PC-9 (cell line): ENCODE measurements at regions of chr19 and their contacts with region 1.

Region 1: GRCh38 chr19:45632468-45633196 is 6.6 kb downstream of the EML2 start:
- DNase-seq: peak; percentile 90 to 94
- H3K4me3 ChIP-seq: no peak overlapping the region
- H3K27ac ChIP-seq: peak overlapping the region; percentile 54
- H3K4me1 ChIP-seq: peaks cover 34% of the 10 kb centered on the region
- H3K27me3 ChIP-seq: no peaks in the 10 kb centered on the region
- CTCF ChIP-seq: no peak

Region 2: GRCh38 chr19:45455707-45456499 is 176.7 kb before region 1 on chr19:
- CTCF ChIA-PET with region 1: no interaction called
- POLR2A ChIA-PET with region 1: no interaction called
- intact Hi-C with region 1: no loop called
- DNase-seq: peak; percentile 98
- H3K4me3 ChIP-seq: peak overlapping the region; percentile 53; the same call in 1 of the 2 replicates
- H3K27ac ChIP-seq: peak overlapping the region; percentile 93
- H3K4me1 ChIP-seq: peaks cover 38% of the 10 kb centered on the region
- H3K27me3 ChIP-seq: no peaks in the 10 kb centered on the region
- CTCF ChIP-seq: no peak

Region 3: DNA sequence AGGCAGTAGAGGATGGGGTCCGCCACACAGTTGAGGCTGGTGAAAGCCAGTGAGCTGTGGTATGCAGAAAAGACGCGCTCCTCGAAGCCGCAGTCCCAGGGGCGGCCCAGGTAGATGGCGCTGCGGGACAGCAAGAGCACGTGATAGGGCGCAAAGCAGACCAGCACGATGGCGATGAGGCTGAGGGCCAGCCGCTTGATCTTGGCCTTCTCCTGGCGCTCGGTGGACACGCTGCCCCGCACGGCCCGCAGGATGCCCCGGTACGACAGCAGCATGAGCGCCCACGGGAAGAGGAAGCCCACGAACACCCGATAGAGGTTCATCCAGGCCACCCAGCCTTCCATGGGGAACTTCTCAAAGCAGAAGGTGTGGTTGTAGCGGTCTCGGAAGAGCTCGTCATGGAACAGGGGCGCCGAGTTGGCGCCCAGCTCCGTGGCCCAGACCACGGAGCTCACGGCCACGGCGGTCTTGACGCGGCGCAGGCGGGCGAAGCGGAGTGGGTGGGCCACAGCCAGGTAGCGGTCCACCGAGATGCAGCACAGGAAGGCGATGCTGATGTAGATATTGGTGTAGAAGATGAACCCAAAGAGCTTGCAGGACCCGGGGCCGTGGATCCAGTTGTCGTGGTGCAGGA is 41.5 kb before region 1 on chr19:
- CTCF ChIA-PET with region 1: interaction called, 10 read pairs
- POLR2A ChIA-PET with region 1: no interaction called
- intact Hi-C with region 1: no loop called
- DNase-seq: peak; percentile 30 to 62
- H3K4me3 ChIP-seq: no peak overlapping the region
- H3K27ac ChIP-seq: no peak overlapping the region
- H3K4me1 ChIP-seq: no peaks in the 10 kb centered on the region
- H3K27me3 ChIP-seq: no peaks in the 10 kb centered on the region
- CTCF ChIP-seq: peak; percentile 49

Region 4: DNA sequence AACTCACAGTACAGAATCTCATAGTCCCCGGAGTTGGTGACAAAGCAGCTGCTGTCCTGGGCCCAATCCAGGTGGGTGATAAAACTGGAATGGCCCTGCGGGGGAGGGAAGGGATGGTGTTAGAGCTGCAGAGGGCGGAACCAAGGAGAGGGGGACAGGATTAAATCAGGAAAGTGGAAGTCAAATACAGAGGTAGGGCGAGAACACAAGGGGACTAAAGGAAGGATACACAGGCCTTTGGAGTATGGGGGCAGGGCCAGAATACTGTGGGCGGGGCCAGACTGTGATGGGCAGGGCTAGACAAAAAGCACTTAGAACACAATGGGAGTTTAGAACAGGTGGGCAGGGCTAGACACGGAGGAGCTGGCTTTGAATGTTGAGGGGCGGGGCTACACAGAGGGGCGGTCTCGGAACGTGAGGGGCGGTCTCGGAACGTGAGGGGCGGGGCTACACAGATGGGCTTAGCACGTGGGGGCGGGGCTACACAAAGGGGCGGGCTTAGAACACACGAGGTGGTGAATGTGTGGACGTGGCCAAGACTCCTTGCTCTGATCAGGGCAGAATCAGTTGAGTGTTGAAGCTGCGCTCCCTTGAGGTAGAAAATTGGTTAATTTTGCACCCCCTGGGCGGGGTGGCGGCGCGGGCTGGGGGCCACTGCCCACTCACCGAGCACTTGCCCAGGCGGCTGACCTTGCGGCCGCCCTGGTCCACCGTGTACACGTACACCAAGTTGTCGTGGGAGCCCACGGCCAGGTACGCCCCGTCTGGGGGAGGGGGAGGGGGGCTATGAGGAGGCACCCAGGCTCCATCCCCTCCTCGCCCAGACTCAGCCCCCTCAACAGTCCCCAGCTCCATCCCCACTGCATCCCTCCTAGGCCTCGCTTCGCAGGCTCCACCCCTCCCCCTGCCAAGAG is 16.6 kb before region 1 on chr19:
- CTCF ChIA-PET with region 1: no interaction called
- POLR2A ChIA-PET with region 1: interaction called, 3 read pairs
- intact Hi-C with region 1: loop called (anchors 1 kb)
- DNase-seq: peak; percentile 80 to 87
- H3K4me3 ChIP-seq: no peak overlapping the region
- H3K27ac ChIP-seq: peak overlapping the region; percentile 53
- H3K4me1 ChIP-seq: peaks cover 22% of the 10 kb centered on the region
- H3K27me3 ChIP-seq: no peaks in the 10 kb centered on the region
- CTCF ChIP-seq: no peak

Region 5: DNA sequence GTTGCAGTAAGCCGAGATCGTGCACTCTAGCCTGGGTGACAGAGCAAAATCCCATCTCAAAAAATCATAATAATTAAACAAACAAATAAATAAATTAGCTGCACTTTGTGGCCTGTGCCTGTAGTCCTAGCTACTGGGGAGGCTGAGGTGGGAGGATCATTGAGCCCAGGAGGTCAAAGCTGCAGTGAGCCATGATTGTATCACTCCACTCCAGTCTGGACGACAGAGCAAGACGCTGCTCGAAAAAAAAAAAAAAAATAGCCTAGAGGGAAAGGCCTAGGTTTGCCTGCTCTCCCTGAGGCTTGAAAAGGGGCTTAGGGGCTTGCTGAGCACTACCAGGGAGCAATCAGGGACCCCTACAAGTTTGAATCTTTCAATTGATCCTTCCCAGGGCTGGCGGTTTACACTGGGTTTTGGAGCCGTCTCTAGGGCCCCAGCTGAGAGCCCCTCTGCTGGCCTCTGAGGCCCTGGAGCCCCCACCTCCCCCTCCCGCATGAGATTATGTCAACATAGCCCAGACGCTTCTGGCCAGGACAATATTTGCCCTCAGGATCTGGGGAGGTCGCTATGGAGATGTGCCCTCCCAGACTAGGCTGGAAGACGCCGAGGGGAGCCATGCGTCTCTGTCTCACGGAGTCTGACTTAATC is 25.0 kb after region 1 on chr19:
- CTCF ChIA-PET with region 1: no interaction called
- POLR2A ChIA-PET with region 1: interaction called, 17 read pairs
- intact Hi-C with region 1: no loop called
- DNase-seq: no peak
- H3K4me3 ChIP-seq: no peak overlapping the region
- H3K27ac ChIP-seq: no peak overlapping the region
- H3K4me1 ChIP-seq: no peaks in the 10 kb centered on the region
- H3K27me3 ChIP-seq: 0 out of 2 replicates have a peak, but pooled peaks cover 3% of the 10 kb centered on the region
- CTCF ChIP-seq: no peak

Region 6: GRCh38 chr19:45692187-45693105 is 59.8 kb after region 1 on chr19 and contains the start of gene QPCTL:
- CTCF ChIA-PET with region 1: no interaction called
- POLR2A ChIA-PET with region 1: no interaction called
- intact Hi-C with region 1: no loop called
- DNase-seq: peak; percentile 97 to 100
- H3K4me3 ChIP-seq: peak within 1 kb of the TSS; percentile 80
- H3K27ac ChIP-seq: peak within 1 kb of the TSS; percentile 72
- H3K4me1 ChIP-seq: peaks cover 11% of the 10 kb centered on the region
- H3K27me3 ChIP-seq: no peaks in the 10 kb centered on the region
- CTCF ChIP-seq: no peak
- total RNA-seq, gene QPCTL: 27.6 and 42.8 TPM in 2 replicates

Region 7: DNA sequence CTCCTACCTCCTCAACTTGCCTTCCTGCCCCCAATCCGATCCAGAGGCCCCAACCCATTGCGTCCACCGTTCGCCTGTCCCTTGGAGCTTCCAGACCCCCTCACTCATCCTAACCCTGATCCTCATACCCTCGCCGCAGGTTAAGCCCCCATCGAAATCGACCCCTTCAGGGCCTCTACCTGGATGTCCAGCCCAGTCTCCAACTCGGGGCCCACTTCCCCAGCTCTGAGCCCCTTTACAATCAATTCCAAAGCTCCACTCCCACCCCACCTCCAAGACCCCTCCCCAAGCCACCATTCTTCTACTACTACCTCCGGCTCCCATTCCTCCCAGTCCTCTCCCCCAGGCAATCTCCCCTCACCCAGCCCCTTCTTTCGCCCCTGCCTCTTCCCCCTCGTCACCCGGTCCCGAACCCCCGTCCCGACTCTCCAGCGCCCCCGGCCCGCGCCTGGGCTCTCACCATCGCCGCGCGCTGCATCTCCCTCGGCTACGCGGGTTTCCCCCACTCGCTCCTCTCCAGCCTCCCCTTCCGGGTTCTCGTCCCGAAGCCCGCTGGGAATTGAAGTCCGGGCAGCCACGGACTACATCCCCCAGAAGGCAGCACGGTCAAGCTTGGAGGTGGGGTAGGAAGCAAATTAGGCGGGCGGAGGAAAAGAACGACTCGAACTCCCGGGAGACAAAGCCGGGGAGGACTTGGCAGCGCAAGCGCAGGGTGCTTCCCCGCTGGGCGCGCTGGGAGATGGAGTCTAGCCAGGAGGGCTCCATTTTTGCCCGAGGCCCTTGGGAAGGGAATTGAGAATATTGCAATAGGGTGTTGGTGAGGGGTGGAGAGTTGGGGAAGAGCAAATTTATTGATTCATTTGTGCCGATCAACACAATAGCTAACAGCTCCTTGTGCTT is 98.0 kb after region 1 on chr19 and contains the start of gene FBXO46:
- CTCF ChIA-PET with region 1: no interaction called
- POLR2A ChIA-PET with region 1: interaction called, 15 read pairs
- intact Hi-C with region 1: no loop called
- DNase-seq: peak; percentile 94 to 97
- H3K4me3 ChIP-seq: peak within 1 kb of the TSS; percentile 93
- H3K27ac ChIP-seq: peak within 1 kb of the TSS; percentile 46
- H3K4me1 ChIP-seq: peaks cover 9% of the 10 kb centered on the region
- H3K27me3 ChIP-seq: no peaks in the 10 kb centered on the region
- CTCF ChIP-seq: no peak; the same call in 1 of the 2 replicates
- total RNA-seq, gene FBXO46: 33.3 and 45.5 TPM in 2 replicates